Naive thymus-derived CD4-positive, alpha-beta T cell (primary cell): ENCODE measurements at regions of chr2 and their contacts with region 1.

Region 1: DNA sequence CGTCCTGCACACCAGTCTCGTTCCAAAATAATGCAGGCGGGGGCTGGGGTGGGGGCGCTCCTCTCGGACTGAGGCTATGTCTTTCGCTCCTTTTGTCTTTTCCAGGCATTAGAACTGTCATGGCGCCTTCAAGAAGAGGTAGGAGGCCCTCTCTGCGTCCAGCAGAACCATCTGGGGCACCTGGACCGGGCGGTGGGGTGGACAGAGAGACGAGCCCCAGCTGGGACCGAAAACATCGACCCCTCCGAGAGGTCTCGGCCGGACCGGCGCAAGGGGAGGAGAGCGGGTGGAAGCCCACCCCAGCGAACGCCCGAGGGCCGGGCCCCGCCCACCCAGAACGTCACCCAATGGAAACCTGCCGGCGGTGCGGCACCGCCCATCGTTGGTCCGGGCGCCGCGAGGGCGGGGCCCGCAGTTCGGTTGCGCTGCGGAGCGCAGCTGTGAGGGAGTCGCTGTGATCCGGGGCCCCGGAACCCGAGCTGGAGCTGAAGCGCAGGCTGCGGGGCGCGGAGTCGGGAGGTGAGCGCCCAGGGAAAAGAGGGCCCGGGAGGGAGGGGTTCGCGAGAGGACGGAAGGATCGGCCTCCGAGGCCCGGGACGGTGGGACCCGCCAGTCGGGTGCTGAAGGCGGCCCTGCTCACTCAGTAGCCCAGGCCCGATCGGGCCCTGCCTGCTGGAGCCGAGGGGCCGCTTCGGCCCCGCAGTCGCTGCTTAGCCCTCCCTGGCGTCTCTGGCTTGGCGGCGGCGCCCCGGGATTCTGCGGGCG is at the start of gene NRBP1:
- DNase-seq: peak; percentile 83 to 97 (median 88)
- ATAC-seq: peak; percentile 97
- H3K4me3 ChIP-seq: peak within 1 kb of the TSS; percentile 84
- H3K4me3 Mint-ChIP-seq: peak within 1 kb of the TSS; percentile 91 to 99 (median 98)
- H3K27ac ChIP-seq: peak within 1 kb of the TSS; percentile 94
- H3K27ac Mint-ChIP-seq: peak within 1 kb of the TSS; percentile 89 to 99 (median 97)
- H3K4me1 ChIP-seq: peaks cover 23 to 28% of the 10 kb centered on the region in 2 donors
- H3K4me1 Mint-ChIP-seq: peaks cover 32 to 48% (median 39%) of the 10 kb centered on the region in 7 donors
- H3K27me3 ChIP-seq: no peaks in the 10 kb centered on the region
- H3K27me3 Mint-ChIP-seq: peaks cover 0 to 3% (median 0%) of the 10 kb centered on the region in 5 donors
- total RNA-seq, gene NRBP1: 94.4 to 181 (median 121) TPM

Region 2: DNA sequence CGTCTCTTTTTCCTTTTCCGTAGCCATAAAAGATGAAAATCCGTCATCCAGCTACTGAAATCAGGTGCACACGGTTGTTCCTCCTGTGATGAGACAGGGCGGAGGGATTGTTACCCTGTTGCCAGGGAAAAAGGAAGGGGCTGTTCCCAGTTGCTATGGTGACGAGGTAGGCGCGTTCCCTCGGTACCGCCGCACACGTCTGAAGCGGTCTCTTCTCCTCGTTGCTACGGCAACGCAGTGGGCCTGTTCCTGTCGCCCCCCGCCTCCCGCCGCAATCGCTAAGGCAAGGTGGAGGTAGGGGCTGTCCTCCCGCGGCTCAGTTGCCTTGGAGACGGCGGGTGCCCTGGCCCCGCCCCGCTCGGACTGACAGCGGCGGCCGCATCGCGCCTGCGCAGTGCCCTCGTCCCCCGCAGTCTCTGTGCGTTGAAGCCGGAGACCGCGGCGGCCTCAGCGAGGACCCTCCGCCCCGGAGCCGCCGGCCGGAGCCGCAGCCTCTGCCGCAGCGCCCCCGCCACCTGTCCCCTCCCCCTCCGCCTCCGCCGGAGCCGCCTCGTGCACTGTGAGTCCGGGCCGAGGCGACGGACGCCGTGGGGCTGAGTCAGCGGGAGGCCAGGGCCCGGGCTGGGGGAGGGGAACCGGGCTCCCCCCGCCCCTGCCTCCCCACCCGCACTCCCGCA is 458.0 kb before region 1 on chr2 and contains the start of gene MAPRE3:
- CTCF ChIA-PET with region 1: no interaction called
- POLR2A ChIA-PET with region 1: no interaction called
- intact Hi-C with region 1: loop called in 1 of 2 experiments (anchors 5 kb)
- DNase-seq: peak; percentile 71 to 93 (median 78)
- ATAC-seq: peak; percentile 93
- H3K4me3 ChIP-seq: peak within 1 kb of the TSS; percentile 89
- H3K4me3 Mint-ChIP-seq: peak within 1 kb of the TSS; percentile 83 to 97 (median 92)
- H3K27ac ChIP-seq: peak within 1 kb of the TSS; percentile 61
- H3K27ac Mint-ChIP-seq: peak within 1 kb of the TSS; percentile 56 to 96 (median 74)
- H3K4me1 ChIP-seq: peaks cover 0 to 12% of the 10 kb centered on the region in 2 donors
- H3K4me1 Mint-ChIP-seq: peaks cover 11 to 36% (median 25%) of the 10 kb centered on the region in 7 donors
- H3K27me3 ChIP-seq: no peaks in the 10 kb centered on the region
- H3K27me3 Mint-ChIP-seq: peaks cover 7 to 68% (median 13%) of the 10 kb centered on the region in 5 donors
- total RNA-seq, gene MAPRE3: 1.8 to 6.0 (median 4.5) TPM

Region 3: DNA sequence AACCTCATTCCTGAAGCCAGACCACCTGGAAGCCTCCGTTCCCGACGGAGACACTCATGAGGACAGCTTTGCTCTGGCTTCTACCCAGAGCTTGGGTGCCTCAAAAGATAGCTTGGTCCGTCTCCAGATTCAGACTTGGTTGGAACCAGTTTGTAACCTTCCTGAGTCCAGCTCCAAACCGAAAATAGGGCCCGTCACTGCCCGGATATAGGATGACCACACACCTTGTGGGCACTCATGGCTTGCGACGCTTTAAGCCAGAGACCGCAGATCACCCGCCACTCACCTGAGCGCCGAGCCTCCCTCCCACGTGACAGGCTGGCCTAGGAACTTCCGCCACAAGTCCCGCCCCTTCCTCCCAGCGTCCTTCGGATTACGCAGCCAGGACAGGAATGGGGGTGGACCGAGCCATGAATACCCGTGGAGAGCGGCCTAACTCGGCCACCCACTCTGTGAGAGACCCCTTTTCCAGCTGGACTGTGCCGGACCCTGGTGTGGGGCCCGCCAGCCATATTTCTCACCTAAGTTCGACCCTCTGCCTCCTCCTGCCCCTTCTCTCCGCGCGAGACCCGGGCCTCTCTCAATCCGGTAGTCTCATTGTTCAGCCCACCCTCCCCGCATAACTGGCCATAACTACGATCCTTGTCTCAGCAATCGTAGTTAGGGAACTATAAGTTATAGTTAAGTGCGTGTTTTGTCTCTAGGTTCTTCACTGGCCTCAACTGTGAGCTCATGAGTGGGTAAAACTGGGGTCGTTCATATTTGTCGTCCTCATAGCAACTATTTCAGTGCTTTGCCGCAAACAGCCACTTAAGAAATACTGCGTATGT is 105.4 kb before region 1 on chr2 and contains the start of gene MPV17:
- CTCF ChIA-PET with region 1: interaction called, 4 read pairs
- POLR2A ChIA-PET with region 1: interaction called, 13 read pairs
- intact Hi-C with region 1: no loop called
- DNase-seq: peak; percentile 65 to 87 (median 82)
- ATAC-seq: peak; percentile 98
- H3K4me3 ChIP-seq: peak within 1 kb of the TSS; percentile 99
- H3K4me3 Mint-ChIP-seq: peak within 1 kb of the TSS; percentile 91 to 100 (median 99)
- H3K27ac ChIP-seq: peak within 1 kb of the TSS; percentile 95
- H3K27ac Mint-ChIP-seq: peak within 1 kb of the TSS; percentile 93 to 100 (median 99)
- H3K4me1 ChIP-seq: peaks cover 17 to 22% of the 10 kb centered on the region in 2 donors
- H3K4me1 Mint-ChIP-seq: peaks cover 14 to 30% (median 23%) of the 10 kb centered on the region in 7 donors
- H3K27me3 ChIP-seq: no peaks in the 10 kb centered on the region
- H3K27me3 Mint-ChIP-seq: no peaks in the 10 kb centered on the region
- total RNA-seq, gene MPV17: 55.7 to 119 (median 94.4) TPM

Region 4: GRCh38 chr2:27409321-27410073 is 18.9 kb before region 1 on chr2 and contains the start of gene PPM1G:
- CTCF ChIA-PET with region 1: no interaction called
- POLR2A ChIA-PET with region 1: interaction called, 58 read pairs
- intact Hi-C with region 1: loop called (anchors 1 kb)
- DNase-seq: peak; percentile 92 to 98 (median 95)
- ATAC-seq: peak; percentile 99
- H3K4me3 ChIP-seq: peak within 1 kb of the TSS; percentile 92
- H3K4me3 Mint-ChIP-seq: peak within 1 kb of the TSS; percentile 87 to 96 (median 92)
- H3K27ac ChIP-seq: peak within 1 kb of the TSS; percentile 89
- H3K27ac Mint-ChIP-seq: peak within 1 kb of the TSS; percentile 89 to 98 (median 95)
- H3K4me1 ChIP-seq: peaks cover 13 to 17% of the 10 kb centered on the region in 2 donors
- H3K4me1 Mint-ChIP-seq: peaks cover 28 to 50% (median 35%) of the 10 kb centered on the region in 7 donors
- H3K27me3 ChIP-seq: no peaks in the 10 kb centered on the region
- H3K27me3 Mint-ChIP-seq: peaks cover 0 to 7% (median 0%) of the 10 kb centered on the region in 5 donors
- total RNA-seq, gene PPM1G: 39.5 to 101 (median 45.1) TPM

Region 5: DNA sequence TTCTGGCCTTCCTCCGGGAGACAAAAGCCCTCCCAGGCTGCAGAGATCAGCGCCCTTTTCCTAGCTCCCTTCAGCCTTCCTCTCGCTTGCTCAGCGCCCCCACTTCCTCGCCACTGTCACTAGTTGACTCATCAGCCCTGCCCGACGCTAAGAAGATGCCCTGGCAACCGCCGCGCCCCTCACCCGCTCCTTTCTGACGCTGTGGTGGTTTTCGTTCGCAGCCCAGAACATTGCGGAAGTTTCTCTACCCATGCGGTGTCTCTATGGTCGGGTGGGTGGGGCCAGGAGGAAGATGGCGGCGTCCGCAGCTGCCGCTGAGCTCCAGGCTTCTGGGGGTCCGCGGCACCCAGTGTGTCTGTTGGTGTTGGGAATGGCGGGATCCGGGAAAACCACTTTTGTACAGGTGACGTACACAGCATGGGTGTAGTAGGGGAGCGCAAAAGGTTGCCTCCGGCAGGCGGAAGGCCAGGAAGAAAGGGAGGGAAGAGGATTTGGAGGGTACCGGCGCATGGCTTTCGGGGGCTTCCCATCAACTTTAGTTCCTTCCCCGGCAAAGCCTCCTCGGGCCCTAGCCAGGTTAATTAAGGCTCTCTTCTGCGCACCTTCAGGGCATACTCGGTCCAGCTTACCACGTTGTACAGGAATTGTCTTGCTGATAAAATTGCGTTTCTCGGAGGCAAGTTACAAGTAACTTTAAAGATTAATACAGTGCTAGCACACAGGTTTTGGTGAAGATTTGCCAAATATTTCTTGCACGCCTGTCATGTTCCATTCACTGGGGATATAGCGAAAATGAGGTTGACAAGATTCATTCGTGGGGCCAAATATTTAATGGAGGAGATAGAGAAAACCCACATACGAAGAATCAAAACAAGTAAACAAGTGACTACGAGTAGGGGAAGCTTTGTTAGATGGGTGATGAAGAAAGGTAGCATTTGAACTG is 200.6 kb after region 1 on chr2 and contains the starts of genes CCDC121 and GPN1:
- CTCF ChIA-PET with region 1: no interaction called
- POLR2A ChIA-PET with region 1: interaction called, 4 read pairs
- intact Hi-C with region 1: loop called (anchors 2 kb)
- DNase-seq: peak; percentile 79 to 96 (median 93)
- ATAC-seq: peak; percentile 99
- H3K4me3 ChIP-seq: peak within 1 kb of the TSS; percentile 92
- H3K4me3 Mint-ChIP-seq: no peak within 1 kb of the TSS
- H3K27ac ChIP-seq: peak within 1 kb of the TSS; percentile 92
- H3K27ac Mint-ChIP-seq: peak within 1 kb of the TSS in 5 of 9 donors; percentile 16 to 72 (median 59)
- H3K4me1 ChIP-seq: peaks cover 11 to 13% of the 10 kb centered on the region in 2 donors
- H3K4me1 Mint-ChIP-seq: peaks cover 1 to 33% (median 22%) of the 10 kb centered on the region in 7 donors
- H3K27me3 ChIP-seq: no peaks in the 10 kb centered on the region
- H3K27me3 Mint-ChIP-seq: no peaks in the 10 kb centered on the region
- total RNA-seq, gene CCDC121: 0.61 to 2.7 (median 1.9) TPM
- total RNA-seq, gene GPN1: 27.8 to 45.5 (median 28.9) TPM

Region 6: GRCh38 chr2:27890146-27890923 is 461.9 kb after region 1 on chr2 and contains the starts of genes BABAM2 and RBKS:
- CTCF ChIA-PET with region 1: no interaction called
- POLR2A ChIA-PET with region 1: no interaction called
- intact Hi-C with region 1: loop called in 1 of 2 experiments (anchors 2 kb)
- DNase-seq: peak; percentile 90 to 96 (median 94)
- ATAC-seq: peak; percentile 92
- H3K4me3 ChIP-seq: peak within 1 kb of the TSS; percentile 95
- H3K4me3 Mint-ChIP-seq: peak within 1 kb of the TSS; percentile 96 to 100 (median 98)
- H3K27ac ChIP-seq: peak within 1 kb of the TSS; percentile 99
- H3K27ac Mint-ChIP-seq: peak within 1 kb of the TSS; percentile 95 to 100 (median 100)
- H3K4me1 ChIP-seq: peaks cover 27 to 30% of the 10 kb centered on the region in 2 donors
- H3K4me1 Mint-ChIP-seq: peaks cover 28 to 60% (median 55%) of the 10 kb centered on the region in 7 donors
- H3K27me3 ChIP-seq: no peaks in the 10 kb centered on the region
- H3K27me3 Mint-ChIP-seq: peaks cover 0 to 3% (median 0%) of the 10 kb centered on the region in 5 donors
- total RNA-seq, gene BABAM2: 34.2 to 55.8 (median 40.3) TPM
- total RNA-seq, gene RBKS: 1.5 to 10.8 (median 2.0) TPM